ENCODE measurements at regions of chr2 and their contacts with region 1.

Region 1: GRCh38 chr2:18741895-18742732 is 152.7 kb upstream of the NT5C1B start:
- DNase-seq: peak; percentile 65
- ATAC-seq: peak; percentile 78

Region 2: DNA sequence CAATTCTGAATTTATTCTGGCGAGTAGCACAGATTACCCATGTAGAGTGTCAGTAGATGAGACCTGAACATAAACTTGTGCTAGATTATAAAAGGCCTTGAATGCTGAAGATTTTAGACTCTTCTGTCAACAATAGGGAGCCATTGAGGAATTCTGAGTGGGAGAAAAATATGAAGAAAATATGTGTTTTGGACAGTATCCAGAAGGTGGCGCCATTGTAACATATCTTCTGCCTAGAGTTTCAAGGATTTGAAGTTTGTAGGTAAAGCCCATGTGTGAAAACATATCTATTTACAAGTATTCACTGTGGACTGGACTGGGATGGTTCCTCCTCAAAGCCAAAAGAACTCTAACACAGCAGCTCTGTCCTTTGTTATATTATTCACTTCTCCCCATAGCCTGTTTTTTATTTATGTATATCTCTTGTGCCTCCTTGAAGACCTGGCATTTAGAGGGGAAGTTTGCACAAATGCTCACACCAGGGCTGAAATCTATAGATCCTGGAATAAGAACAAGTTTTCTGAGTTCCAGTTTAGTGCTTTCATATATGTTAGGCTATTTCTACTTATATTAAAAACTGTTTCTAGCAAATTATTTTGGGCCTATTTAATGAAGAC is 306.6 kb before region 1 on chr2:
- intact Hi-C with region 1: loop called (anchors 5 kb)
- DNase-seq: no peak
- ATAC-seq: peak; percentile 43

Region 3: GRCh38 chr2:18626256-18626668 is 115.9 kb before region 1 on chr2:
- intact Hi-C with region 1: no loop called
- DNase-seq: no peak
- ATAC-seq: peak; percentile 62

Region 4: DNA sequence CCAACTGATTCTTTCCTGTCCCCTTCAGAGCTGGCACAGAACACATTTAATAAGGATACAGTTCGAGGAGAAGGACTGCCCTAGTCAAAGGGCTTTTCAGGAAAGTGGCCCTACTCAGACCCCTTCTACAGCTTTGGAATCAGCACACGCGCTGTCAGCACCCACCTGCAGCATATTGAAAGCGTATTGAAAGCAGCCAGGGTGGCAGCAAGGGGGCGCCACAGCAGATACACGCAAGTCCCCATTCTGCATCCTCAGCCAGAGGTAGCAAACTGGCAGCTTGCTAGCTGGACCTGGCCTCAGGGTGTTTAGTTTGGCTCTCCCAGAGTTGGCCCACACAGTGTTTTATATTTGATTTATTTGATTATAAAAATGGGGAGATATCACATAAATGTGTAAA is 51.8 kb before region 1 on chr2:
- intact Hi-C with region 1: no loop called
- DNase-seq: no peak
- ATAC-seq: no peak

Region 5: DNA sequence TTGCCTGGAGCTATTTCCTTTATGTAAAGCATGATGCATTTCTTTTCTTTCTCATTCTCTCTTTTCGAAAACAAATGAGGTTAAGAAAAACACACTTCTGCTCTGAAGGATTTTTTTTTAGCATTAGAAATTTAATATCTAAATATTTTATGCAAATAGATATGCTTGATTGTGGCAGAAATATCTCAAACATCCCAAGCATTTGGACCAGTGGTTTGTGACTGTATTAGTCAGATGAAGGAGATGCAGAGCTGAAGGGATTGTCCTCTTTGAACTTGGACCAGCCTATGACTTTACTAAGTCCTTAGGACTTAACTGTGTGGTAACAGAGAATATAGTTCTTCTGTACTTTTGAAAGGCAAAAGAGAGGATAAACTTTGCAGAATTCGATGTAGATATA is 183.2 kb after region 1 on chr2:
- intact Hi-C with region 1: no loop called
- DNase-seq: no peak
- ATAC-seq: no peak

Measured in Right ventricle myocardium inferior (tissue), 1 donor.